ENCODE measurements at regions of chr21 and their contacts with region 1.

Region 1: DNA sequence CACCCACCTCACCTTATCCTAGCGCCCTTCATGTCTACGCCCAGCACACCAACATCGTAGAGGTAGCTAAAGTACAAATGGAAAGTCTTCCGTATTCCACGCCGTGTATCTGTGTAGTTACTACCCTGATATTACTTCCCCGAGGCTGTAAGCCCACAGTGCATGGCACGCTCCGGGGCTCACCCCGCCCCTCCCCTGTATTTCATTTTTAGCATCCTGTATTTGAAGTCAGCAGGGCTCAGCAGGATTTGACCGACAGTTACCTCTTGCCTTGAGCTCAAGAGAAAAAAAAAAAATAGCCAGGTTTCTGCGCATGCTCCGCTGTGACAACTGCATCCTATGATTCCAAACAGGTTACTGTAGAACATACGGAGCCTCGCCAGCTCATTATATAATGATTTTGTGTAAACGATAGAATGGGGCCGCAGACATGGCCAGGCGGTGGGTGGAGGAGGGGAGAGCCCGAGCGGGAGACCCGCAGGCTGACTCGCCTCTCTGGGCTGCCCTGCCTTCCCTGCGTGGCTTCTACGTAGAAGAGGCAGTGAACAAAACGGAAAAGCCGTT is 1.3 kb downstream of the ABCG1 start:
- DNase-seq: peak; percentile 89
- H3K4me3 ChIP-seq: peak overlapping the region; percentile 66 to 74 (median 70)
- H3K27ac ChIP-seq: peak overlapping the region; percentile 77 to 91 (median 82)
- H3K4me1 ChIP-seq: peaks cover 0 to 42% (median 33%) of the 10 kb centered on the region in 4 donors
- H3K27me3 ChIP-seq: no peaks in the 10 kb centered on the region
- CTCF ChIP-seq: no peak
- EP300 ChIP-seq: peak in 3 of 4 donors; percentile 6 to 84 (median 52)
- POLR2A ChIP-seq: no peak

Region 2: GRCh38 chr21:42258153-42258884 is 38.1 kb after region 1 on chr21:
- intact Hi-C with region 1: loop called (anchors 2 kb)
- DNase-seq: peak; percentile 82
- H3K4me3 ChIP-seq: no peak overlapping the region
- H3K27ac ChIP-seq: no peak overlapping the region
- H3K4me1 ChIP-seq: peaks cover 0 to 39% (median 31%) of the 10 kb centered on the region in 4 donors
- H3K27me3 ChIP-seq: no peaks in the 10 kb centered on the region
- CTCF ChIP-seq: peak; percentile 19 to 83 (median 68)
- EP300 ChIP-seq: no peak
- POLR2A ChIP-seq: no peak

Measured in sigmoid colon (tissue), 7 donors.